GM12878 (cell line): ENCODE measurements at regions of chr3 and their contacts with region 1.

Region 1: DNA sequence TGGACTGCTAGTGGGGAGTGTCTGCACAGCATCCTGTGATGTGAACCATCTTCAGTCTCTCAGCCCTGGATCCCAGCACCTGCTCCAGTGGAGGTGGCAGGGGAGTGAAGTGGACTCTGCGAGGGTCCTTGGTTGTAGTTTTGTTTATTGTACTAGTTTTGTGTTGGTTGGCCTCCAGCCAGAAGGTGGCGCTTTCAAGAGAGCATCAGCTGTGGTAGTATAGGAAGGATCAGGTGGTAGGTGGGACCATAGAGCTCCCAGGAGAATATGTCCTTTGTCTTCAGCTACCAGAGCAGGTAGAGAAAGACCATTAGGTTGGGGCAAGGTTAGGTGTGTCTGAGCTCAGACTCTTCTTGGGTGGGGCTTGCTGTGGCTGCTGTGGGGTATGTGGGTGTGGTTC is 20.9 kb downstream of the NEK11 start:
- DNase-seq: no peak
- ATAC-seq: peak; percentile 61
- H3K4me3 ChIP-seq: no peak overlapping the region
- H3K27ac ChIP-seq: no peak overlapping the region
- H3K4me1 ChIP-seq: no peaks in the 10 kb centered on the region
- H3K27me3 ChIP-seq: no peaks in the 10 kb centered on the region
- CTCF ChIP-seq: peak; percentile 3 to 25 (median 14); a peak in 1 of 6 replicates
- EP300 ChIP-seq: no peak
- POLR2A ChIP-seq: no peak
- RAD21 ChIP-seq: no peak

Region 2: GRCh38 chr3:130576375-130577266 is 471.0 kb before region 1 on chr3:
- CTCF ChIA-PET with region 1: no interaction called
- POLR2A ChIA-PET with region 1: no interaction called
- RAD21 ChIA-PET with region 1: no interaction called
- SMC1A ChIA-PET with region 1: no interaction called
- in situ Hi-C with region 1: no loop called
- intact Hi-C with region 1: no loop called
- DNase-seq: no peak
- ATAC-seq: no peak
- H3K4me3 ChIP-seq: no peak overlapping the region
- H3K27ac ChIP-seq: no peak overlapping the region
- H3K4me1 ChIP-seq: no peaks in the 10 kb centered on the region
- H3K27me3 ChIP-seq: peaks cover 0 to 2% of the 10 kb centered on the region in 2 experiments; a peak in 2 of 4 replicates
- CTCF ChIP-seq: no peak
- EP300 ChIP-seq: no peak
- POLR2A ChIP-seq: no peak
- RAD21 ChIP-seq: no peak

Region 3: GRCh38 chr3:132016061-132017041 is 968.8 kb after region 1 on chr3:
- CTCF ChIA-PET with region 1: no interaction called
- POLR2A ChIA-PET with region 1: no interaction called
- RAD21 ChIA-PET with region 1: no interaction called
- SMC1A ChIA-PET with region 1: no interaction called
- in situ Hi-C with region 1: loop called (anchors 5 kb)
- intact Hi-C with region 1: no loop called
- DNase-seq: no peak
- ATAC-seq: no peak
- H3K4me3 ChIP-seq: no peak overlapping the region
- H3K27ac ChIP-seq: no peak overlapping the region
- H3K4me1 ChIP-seq: no peaks in the 10 kb centered on the region
- H3K27me3 ChIP-seq: no peaks in the 10 kb centered on the region; a peak in 1 of 4 replicates
- CTCF ChIP-seq: no peak
- EP300 ChIP-seq: no peak
- POLR2A ChIP-seq: no peak
- RAD21 ChIP-seq: no peak

Region 4: DNA sequence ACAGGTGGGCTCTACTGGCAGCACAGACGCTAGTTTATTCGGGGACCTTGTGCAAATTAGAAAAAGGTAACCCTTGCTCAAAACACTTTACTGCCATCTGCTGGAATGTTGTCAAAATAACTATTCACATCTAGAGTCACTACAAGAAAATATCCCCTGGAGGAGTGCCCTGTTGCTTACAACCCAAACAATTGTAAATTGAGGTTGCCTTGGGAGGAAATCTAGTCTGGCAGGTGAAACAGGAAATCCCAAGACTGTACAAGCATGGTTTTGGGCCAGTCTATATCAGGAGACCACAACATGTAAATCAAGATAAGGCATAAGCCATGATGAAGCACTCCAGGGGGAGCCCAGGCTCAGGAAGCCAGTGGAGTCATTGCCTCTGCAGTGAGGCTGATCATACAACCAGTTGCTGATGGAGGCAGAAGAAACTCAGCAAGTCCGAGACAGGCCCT is 1132.8 kb after region 1 on chr3:
- CTCF ChIA-PET with region 1: no interaction called
- POLR2A ChIA-PET with region 1: no interaction called
- RAD21 ChIA-PET with region 1: no interaction called
- SMC1A ChIA-PET with region 1: no interaction called
- in situ Hi-C with region 1: no loop called
- intact Hi-C with region 1: loop called (anchors 5 kb)
- DNase-seq: peak; percentile 5
- ATAC-seq: peak; percentile 84
- H3K4me3 ChIP-seq: no peak overlapping the region
- H3K27ac ChIP-seq: no peak overlapping the region
- H3K4me1 ChIP-seq: no peaks in the 10 kb centered on the region
- H3K27me3 ChIP-seq: no peaks in the 10 kb centered on the region; a peak in 1 of 4 replicates
- CTCF ChIP-seq: peak; percentile 38 to 61 (median 46); a peak in 5 of 6 replicates
- EP300 ChIP-seq: no peak
- POLR2A ChIP-seq: no peak
- RAD21 ChIP-seq: peak; percentile 70